ENCODE measurements at regions of chr7 and their contacts with region 1.

Region 1: GRCh38 chr7:100428967-100429636 is 529 bp upstream of the MEPCE start:
- DNase-seq: peak; percentile 100
- H3K4me3 Mint-ChIP-seq: peak overlapping the region; percentile 95
- H3K27ac Mint-ChIP-seq: peak overlapping the region; percentile 99
- H3K4me1 Mint-ChIP-seq: peaks cover 41% of the 10 kb centered on the region
- H3K27me3 Mint-ChIP-seq: peaks cover 10% of the 10 kb centered on the region

Region 2: DNA sequence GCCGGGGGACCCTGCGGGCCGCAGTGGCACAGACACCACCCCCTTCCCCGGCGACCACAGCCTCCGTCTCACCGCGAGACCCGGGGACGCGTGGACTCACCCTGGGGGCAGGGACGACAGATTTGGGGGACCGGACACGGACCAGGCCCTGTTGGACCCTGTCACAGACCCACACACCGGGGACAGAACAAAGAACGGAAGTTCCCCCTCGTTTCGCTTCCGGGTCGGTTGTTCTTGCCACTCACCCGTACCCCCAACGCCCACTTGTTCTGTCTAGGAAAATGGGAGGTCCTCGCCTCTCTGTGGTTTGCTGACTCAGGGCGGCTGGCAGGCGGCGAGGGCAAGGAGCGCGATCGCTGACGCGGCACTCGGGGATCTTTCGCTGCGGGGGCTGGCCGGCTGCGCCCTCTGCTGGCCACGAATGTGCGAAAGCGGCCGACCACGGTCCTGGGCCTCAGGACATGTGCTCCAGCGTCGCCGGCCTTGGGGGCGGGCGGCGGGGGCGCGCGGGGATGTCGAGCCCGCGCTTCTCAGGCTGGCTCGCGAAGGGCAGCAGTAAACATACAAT is 347.5 kb before region 1 on chr7 and contains the start of gene ZNF3:
- intact Hi-C with region 1: loop called (anchors 2 kb)
- DNase-seq: peak; percentile 98
- H3K4me3 Mint-ChIP-seq: peak within 1 kb of the TSS; percentile 89
- H3K27ac Mint-ChIP-seq: peak within 1 kb of the TSS; percentile 92
- H3K4me1 Mint-ChIP-seq: peaks cover 31% of the 10 kb centered on the region
- H3K27me3 Mint-ChIP-seq: peaks cover 4% of the 10 kb centered on the region
- total RNA-seq, gene ZNF3: 24.6 and 26.1 TPM in 2 replicates

Region 3: DNA sequence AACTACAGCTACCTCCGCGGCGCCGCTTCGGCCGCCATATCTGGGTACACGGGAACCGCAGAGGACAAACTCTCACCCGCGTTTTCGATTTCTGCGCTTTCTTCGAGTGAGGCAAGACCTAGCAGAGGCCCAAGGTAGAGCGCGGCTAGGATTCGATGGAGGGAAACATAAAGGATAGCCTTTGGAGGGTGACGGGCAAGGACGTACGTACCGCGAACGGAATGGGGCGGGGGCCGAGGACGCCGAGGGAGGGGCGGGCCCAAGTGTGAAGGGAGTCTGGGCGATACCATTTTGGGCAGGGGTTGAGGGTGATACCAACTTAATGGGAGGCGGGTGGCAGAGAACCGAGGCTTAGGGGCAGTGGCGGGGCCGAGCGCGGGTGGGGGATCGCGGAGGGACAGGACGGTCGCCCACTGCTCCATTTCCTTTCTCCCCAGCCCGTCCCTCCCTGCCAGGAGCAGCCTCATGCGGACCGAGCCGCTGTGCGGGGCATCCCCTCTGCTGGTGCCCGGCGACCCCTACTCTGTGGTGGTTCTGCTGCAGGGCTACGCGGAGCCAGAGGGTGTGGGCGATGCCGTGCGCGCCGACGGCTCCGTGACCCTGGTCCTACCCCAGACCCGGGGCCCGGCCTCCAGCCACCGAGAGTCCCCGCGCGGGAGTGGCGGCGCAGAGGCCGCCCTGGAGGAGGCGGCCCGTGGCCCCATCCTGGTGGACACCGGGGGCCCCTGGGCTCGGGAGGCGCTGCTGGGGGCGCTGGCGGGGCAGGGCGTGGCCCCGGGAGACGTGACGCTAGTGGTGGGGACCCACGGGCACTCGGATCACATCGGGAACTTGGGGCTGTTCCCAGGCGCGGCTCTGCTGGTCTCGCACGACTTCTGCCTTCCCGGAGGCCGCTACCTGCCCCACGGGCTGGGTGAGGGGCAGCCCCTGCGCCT is 301.9 kb before region 1 on chr7 and contains the start of gene MBLAC1:
- intact Hi-C with region 1: loop called (anchors 1 kb)
- DNase-seq: peak; percentile 85
- H3K4me3 Mint-ChIP-seq: peak within 1 kb of the TSS; percentile 94
- H3K27ac Mint-ChIP-seq: peak within 1 kb of the TSS; percentile 95
- H3K4me1 Mint-ChIP-seq: peaks cover 20% of the 10 kb centered on the region
- H3K27me3 Mint-ChIP-seq: no peaks in the 10 kb centered on the region
- total RNA-seq, gene MBLAC1: 4.1 and 5.5 TPM in 2 replicates

Region 4: DNA sequence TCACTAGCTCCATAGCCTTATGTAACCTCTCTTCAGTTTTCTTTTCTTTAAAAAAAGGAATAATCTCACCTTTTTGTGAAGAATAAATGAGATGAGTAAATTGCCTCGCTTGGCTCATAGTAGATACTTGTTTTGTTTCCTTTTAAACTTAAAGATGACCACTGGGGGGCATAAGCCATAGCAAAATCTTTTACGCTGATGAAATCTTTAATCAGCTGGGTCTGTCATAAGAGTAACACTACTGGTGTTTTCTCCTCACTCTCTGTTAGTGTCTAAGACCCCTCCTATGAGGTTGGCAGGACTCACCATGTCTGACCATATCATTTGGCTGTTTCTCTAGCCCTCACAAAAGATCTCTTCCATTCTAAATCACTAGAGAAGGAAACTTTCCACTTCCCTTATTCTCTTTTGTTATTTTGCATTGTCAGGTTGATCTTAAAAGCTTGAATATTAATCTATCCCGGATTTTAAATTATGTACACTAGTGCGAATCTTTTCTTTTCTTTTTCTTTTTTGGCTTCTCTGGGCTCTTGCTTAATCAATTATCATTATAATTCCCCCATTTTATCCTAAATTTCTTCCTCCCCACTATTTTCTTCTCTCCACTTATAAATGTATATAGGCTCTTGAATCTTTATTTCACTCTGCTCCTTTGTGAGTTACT is 238.9 kb before region 1 on chr7:
- intact Hi-C with region 1: no loop called
- DNase-seq: no peak
- H3K4me3 Mint-ChIP-seq: no peak overlapping the region
- H3K27ac Mint-ChIP-seq: peak overlapping the region; percentile 8
- H3K4me1 Mint-ChIP-seq: peaks cover 29% of the 10 kb centered on the region
- H3K27me3 Mint-ChIP-seq: no peaks in the 10 kb centered on the region

Region 5: DNA sequence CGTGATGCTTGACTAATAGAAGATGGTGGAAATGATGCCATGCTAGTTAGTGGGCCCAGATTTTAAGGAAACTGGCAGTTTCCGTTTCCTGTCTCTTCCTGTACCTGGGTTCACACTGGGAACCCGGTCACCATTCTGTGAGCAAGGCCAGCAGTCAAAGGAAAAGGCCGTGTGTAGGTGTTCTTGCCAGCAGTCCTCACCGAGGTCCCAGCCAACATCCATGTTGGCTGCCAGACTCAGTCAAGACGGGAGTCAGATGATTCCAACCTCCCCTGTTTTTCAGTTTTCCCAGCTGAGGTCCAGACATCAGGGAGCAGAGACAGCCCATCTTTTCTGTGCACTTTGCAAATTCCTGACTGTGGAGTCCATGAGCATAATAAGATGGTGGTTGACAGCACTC is 86.3 kb before region 1 on chr7:
- intact Hi-C with region 1: loop called (anchors 1 kb)
- DNase-seq: no peak
- H3K4me3 Mint-ChIP-seq: no peak overlapping the region
- H3K27ac Mint-ChIP-seq: no peak overlapping the region
- H3K4me1 Mint-ChIP-seq: peaks cover 39% of the 10 kb centered on the region
- H3K27me3 Mint-ChIP-seq: no peaks in the 10 kb centered on the region

Region 6: GRCh38 chr7:100538654-100539435 is 109.7 kb after region 1 on chr7 and contains the start of gene AGFG2:
- intact Hi-C with region 1: loop called (anchors 1 kb)
- DNase-seq: peak; percentile 100
- H3K4me3 Mint-ChIP-seq: peak within 1 kb of the TSS; percentile 98
- H3K27ac Mint-ChIP-seq: peak within 1 kb of the TSS; percentile 85
- H3K4me1 Mint-ChIP-seq: peaks cover 44% of the 10 kb centered on the region
- H3K27me3 Mint-ChIP-seq: no peaks in the 10 kb centered on the region
- total RNA-seq, gene AGFG2: 113 and 124 TPM in 2 replicates

Region 7: DNA sequence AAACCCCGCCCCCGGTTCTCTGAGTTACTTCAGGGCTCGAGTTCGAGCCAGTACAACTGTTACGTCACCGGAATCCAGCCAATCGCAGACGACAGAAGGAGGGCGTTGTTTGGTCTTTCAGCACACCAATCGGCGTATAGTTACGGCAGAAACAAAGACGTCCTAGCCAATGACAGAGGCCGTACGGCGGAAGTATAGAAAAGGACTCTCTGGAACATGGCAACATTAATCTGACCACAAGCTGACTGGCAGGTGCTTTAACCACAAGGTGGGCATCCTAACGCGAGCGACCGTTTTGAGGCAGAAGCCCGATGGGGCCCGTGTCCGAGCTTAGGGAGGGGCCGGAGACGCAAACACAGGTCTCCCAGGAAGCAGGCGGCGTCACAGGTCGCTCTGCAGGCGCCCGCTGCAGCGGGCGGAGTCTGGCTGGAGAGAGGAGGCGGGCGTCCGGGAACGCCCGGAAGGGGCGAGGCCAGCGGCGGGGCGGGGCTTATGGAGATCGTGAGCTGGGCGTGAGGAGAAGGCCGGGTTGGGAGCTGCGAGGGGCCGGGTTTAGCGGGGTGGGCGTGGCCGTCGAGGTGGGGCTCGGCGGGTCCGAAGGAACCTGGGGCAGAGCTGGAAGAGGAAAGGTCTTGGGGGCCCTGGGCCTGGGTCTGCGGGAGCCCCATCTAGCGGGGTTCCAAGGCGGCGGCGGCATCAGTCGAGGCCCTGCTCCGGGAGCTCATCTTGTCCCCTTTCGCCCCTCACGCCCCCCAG is 183.1 kb after region 1 on chr7 and contains the start of gene MOSPD3:
- intact Hi-C with region 1: loop called (anchors 2 kb)
- DNase-seq: peak; percentile 97
- H3K4me3 Mint-ChIP-seq: peak within 1 kb of the TSS; percentile 98
- H3K27ac Mint-ChIP-seq: peak within 1 kb of the TSS; percentile 100
- H3K4me1 Mint-ChIP-seq: peaks cover 22% of the 10 kb centered on the region
- H3K27me3 Mint-ChIP-seq: peaks cover 8% of the 10 kb centered on the region
- total RNA-seq, gene MOSPD3: 10.3 and 11.5 TPM in 2 replicates

Region 8: DNA sequence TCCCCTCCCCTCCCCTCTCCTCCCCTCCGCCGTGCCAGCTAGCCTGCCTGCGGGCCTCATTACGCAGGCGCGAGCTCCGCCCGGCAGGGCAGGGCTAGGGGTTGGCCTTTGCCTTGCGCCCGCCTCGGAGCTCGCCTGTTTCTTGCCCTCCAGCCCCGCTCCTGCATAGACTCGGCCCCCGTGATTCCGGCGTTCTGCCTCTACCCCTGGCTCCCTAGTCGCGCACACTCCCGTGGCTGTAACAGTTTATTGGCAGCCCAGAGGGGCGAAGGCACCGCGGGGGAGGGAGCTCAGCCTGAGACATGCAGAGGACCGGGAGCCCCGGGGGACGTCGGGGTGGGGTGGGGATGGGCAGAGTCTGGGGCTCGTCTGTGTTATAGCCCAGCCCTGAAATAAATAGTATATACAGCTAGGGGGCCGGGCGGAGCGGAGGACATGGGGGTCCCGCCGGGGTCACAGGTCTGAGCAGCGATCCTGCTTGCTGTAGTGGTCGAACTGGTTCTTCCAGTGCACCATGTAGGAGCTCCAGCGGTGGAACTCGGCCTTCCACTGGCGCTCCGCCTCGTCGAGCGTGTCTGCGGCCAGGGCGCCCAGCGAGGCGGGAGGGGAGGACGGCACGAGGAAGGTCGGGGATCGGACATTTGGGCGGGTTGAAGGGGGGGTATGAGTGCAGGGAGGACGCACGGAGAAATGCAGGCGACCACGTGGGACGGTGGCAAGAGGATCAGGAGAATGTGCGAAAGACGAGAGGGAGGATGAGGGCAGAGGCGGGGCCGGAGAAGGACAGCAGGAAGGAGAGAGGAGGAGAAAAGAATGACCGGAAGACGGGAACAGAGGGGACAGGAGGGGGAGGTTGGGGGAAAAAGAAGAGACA is 460.9 kb after region 1 on chr7:
- intact Hi-C with region 1: loop called (anchors 1 kb)
- DNase-seq: peak; percentile 91
- H3K4me3 Mint-ChIP-seq: peak overlapping the region; percentile 82
- H3K27ac Mint-ChIP-seq: peak overlapping the region; percentile 67
- H3K4me1 Mint-ChIP-seq: peaks cover 42% of the 10 kb centered on the region
- H3K27me3 Mint-ChIP-seq: peaks cover 23% of the 10 kb centered on the region